ENCODE measurements at regions of chr1 and their contacts with region 1.

Region 1: DNA sequence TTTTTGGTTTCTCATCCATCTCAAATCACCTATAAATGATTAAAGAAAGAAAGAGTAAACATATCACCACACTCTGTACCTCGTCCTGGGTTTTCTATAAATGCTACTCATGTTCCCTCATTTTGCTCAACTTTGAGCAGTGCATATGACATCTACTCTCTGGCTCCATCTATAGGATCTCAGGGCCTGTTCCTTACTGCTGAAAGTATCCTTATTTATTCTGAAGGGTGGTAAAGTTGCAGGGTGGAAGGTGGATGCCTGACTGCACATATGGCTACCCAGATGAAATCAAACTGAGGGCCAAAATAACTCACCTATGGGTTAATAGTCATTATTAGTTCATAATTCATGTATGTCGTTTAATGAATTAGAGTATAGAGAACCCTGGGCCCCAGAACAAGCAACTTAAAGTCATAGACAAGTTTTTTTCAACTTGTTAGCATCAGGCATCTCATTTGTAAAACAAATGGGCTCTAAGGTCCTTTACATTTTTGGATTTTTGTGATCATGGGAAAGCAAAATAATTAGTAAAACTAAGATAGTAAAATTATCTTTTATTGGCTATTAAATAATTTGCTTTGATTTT is 46.5 kb downstream of the NCF2 start:
- DNase-seq: peak; percentile 50
- ATAC-seq: peak; percentile 97
- H3K4me3 ChIP-seq: no peak overlapping the region
- H3K27ac ChIP-seq: no peak overlapping the region
- H3K4me1 ChIP-seq: no peaks in the 10 kb centered on the region
- H3K27me3 ChIP-seq: no peaks in the 10 kb centered on the region
- CTCF ChIP-seq: peak; percentile 62
- EP300 ChIP-seq: no peak
- POLR2A ChIP-seq: no peak
- RAD21 ChIP-seq: peak; percentile 47; the same call in 1 of the 2 replicates

Region 2: DNA sequence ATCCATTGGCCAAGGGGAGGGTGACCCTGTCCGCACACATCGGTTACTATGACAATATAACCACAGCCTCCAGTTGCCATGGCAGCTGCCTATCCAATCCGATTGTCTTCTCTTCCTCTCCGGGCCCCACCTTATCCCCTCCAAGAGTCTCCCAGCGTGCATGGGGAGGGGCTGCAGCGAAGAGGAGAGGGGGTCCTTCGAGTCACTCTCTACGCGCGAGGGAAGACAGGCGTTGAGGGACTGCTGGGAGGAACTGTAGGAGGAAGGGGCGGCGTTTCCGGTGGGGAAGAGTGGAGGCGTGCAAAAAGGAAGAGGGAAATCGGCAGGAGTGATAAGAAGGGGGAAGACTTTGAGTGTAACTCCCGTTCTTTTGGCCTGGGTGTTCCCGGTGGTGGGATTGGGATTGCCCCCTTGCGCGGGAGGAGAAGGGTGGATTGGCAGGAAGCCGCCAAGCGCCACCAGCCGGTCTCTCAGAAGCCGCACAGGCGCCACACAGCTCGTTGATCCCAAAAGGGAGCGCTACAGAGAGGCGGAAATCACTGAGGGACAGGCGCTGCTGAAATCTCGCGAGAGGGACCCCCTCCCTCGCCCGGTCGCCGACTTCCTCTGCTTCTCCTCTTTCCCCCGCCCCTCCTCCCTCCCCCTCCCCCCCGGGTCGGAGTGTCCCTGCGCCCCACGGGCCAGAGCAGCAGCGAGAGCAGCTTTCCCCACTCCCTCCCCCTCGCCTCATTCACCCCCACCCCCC is 71.8 kb before region 1 on chr1:
- CTCF ChIA-PET with region 1: interaction called, 11 read pairs
- POLR2A ChIA-PET with region 1: no interaction called
- in situ Hi-C with region 1: no loop called
- intact Hi-C with region 1: loop called (anchors 1 kb)
- DNase-seq: peak; percentile 96
- ATAC-seq: peak; percentile 80
- H3K4me3 ChIP-seq: peak overlapping the region; percentile 80 to 99 (median 87)
- H3K27ac ChIP-seq: peak overlapping the region; percentile 100
- H3K4me1 ChIP-seq: peaks cover 53% of the 10 kb centered on the region
- H3K27me3 ChIP-seq: no peaks in the 10 kb centered on the region; a peak in 1 of 5 replicates
- CTCF ChIP-seq: peak; percentile 32; the same call in 1 of the 2 replicates
- EP300 ChIP-seq: no peak
- POLR2A ChIP-seq: peak; percentile 50 to 64; a peak in 3 of 4 replicates
- RAD21 ChIP-seq: peak; percentile 35

Measured in HepG2 (cell line).